Activated CD8-positive, alpha-beta memory T cell treated with anti-CD3 and anti-CD28 coated beads, Interleukin-2, amount 10 ng/mL, durations not matched to agents 7 days and 5 days (primary cell): ENCODE measurements at regions of chr5 and their contacts with region 1.

Region 1: GRCh38 chr5:73550016-73550415 is 15.4 kb downstream of the ANKRA2 start:
- DNase-seq: no peak
- ATAC-seq: no peak
- H3K4me3 Mint-ChIP-seq: no peak overlapping the region
- H3K27ac Mint-ChIP-seq: no peak overlapping the region
- H3K4me1 Mint-ChIP-seq: no peaks in the 10 kb centered on the region
- H3K27me3 Mint-ChIP-seq: peaks cover 8% of the 10 kb centered on the region

Region 2: GRCh38 chr5:73419465-73420390 is 130.3 kb before region 1 on chr5:
- CTCF ChIA-PET with region 1: no interaction called
- DNase-seq: no peak
- ATAC-seq: no peak
- H3K4me3 Mint-ChIP-seq: no peak overlapping the region
- H3K27ac Mint-ChIP-seq: no peak overlapping the region
- H3K4me1 Mint-ChIP-seq: peaks cover 4% of the 10 kb centered on the region
- H3K27me3 Mint-ChIP-seq: peaks cover 87% of the 10 kb centered on the region

Region 3: DNA sequence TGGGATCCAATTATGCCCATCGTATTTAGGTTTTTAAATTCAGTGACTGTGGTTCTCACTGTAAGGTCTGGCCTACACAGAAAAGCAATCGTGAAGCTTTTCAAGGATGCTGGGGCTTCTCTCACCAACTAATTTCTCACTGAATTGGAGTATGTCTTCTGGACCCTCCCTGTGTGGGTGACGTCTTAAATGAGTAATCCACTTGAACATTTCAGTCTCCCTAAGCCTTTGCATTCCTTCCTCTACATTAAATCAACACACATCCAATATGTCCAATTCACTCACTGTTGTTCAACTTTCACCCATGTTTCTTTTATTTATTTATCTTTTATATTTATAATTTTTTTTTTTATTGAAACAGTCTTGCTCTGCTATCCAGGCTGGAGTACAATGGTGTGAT is 64.3 kb before region 1 on chr5:
- CTCF ChIA-PET with region 1: no interaction called
- DNase-seq: no peak
- ATAC-seq: no peak
- H3K4me3 Mint-ChIP-seq: no peak overlapping the region
- H3K27ac Mint-ChIP-seq: no peak overlapping the region
- H3K4me1 Mint-ChIP-seq: no peaks in the 10 kb centered on the region
- H3K27me3 Mint-ChIP-seq: peaks cover 24% of the 10 kb centered on the region

Region 4: DNA sequence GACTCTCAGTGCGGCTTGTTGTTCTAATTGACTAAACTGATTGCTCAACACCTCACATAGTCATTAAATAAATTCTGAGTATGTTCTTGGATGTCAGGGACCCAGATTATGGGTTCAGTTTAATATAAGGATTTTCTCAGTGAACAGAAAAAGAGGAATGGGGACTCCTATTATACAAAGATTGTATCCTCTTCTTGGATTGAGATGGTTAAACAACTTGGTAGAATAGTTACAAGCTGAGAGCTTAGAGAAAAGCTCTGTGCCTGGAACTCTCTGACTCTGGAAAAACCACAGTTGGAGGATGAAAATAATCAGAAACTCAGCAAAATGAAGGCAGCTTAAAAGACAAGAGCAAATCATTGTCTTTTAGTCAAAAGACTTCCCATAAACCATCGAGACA is 15.0 kb before region 1 on chr5:
- CTCF ChIA-PET with region 1: interaction called, 19 read pairs
- DNase-seq: no peak
- ATAC-seq: no peak
- H3K4me3 Mint-ChIP-seq: no peak overlapping the region
- H3K27ac Mint-ChIP-seq: no peak overlapping the region
- H3K4me1 Mint-ChIP-seq: no peaks in the 10 kb centered on the region
- H3K27me3 Mint-ChIP-seq: peaks cover 53% of the 10 kb centered on the region

Region 5: GRCh38 chr5:73606206-73606753 is 56.3 kb after region 1 on chr5:
- CTCF ChIA-PET with region 1: no interaction called
- DNase-seq: no peak
- ATAC-seq: no peak
- H3K4me3 Mint-ChIP-seq: no peak overlapping the region
- H3K27ac Mint-ChIP-seq: no peak overlapping the region
- H3K4me1 Mint-ChIP-seq: no peaks in the 10 kb centered on the region
- H3K27me3 Mint-ChIP-seq: peaks cover 31% of the 10 kb centered on the region